Naive thymus-derived CD4-positive, alpha-beta T cell (primary cell): ENCODE measurements at regions of chr10 and their contacts with region 1.

Region 1: GRCh38 chr10:80535671-80536365 is 1.9 kb upstream of the SH2D4B start:
- DNase-seq: peak; percentile 64 to 82 (median 78)
- ATAC-seq: peak; percentile 92
- H3K4me3 ChIP-seq: peak overlapping the region; percentile 59
- H3K4me3 Mint-ChIP-seq: peak overlapping the region; percentile 84 to 99 (median 93)
- H3K27ac ChIP-seq: peak overlapping the region; percentile 82
- H3K27ac Mint-ChIP-seq: peak overlapping the region; percentile 97 to 100 (median 99)
- H3K4me1 ChIP-seq: peaks cover 13 to 28% of the 10 kb centered on the region in 2 donors
- H3K4me1 Mint-ChIP-seq: peaks cover 17 to 42% (median 40%) of the 10 kb centered on the region in 7 donors
- H3K27me3 ChIP-seq: no peaks in the 10 kb centered on the region
- H3K27me3 Mint-ChIP-seq: no peaks in the 10 kb centered on the region

Region 2: DNA sequence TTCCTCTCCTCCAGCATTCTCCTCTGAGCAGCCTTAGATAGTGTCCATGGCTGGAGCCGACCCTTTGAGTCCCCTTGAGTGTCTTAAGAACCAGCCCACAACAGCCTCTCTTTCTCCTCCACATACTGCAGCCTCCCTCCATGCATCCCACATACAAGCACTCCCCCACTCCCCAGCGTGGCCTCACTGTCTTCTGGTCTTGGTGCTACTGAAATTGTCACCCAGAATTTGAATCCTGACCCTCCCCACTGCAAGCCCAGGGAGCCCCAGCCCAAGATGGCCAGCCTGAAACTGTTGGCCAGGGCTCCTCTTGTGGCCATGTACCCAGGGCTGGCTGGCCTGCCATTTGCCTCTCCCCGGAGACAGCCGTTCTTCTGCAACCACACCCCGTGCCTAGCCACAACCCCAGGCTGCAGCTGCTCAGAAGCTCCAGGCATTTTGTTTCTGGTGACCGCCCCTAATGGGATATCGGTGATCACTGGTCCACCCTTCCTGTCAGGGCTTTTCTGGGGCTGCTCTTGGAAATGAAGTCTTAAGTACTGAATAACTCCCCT is 16.9 kb before region 1 on chr10:
- CTCF ChIA-PET with region 1: no interaction called
- POLR2A ChIA-PET with region 1: no interaction called
- intact Hi-C with region 1: no loop called
- DNase-seq: no peak
- ATAC-seq: no peak
- H3K4me3 ChIP-seq: no peak overlapping the region
- H3K4me3 Mint-ChIP-seq: no peak overlapping the region
- H3K27ac ChIP-seq: no peak overlapping the region
- H3K27ac Mint-ChIP-seq: peak overlapping the region; percentile 3 to 79 (median 60)
- H3K4me1 ChIP-seq: no peaks in the 10 kb centered on the region
- H3K4me1 Mint-ChIP-seq: peaks cover 22 to 51% (median 36%) of the 10 kb centered on the region in 7 donors
- H3K27me3 ChIP-seq: no peaks in the 10 kb centered on the region
- H3K27me3 Mint-ChIP-seq: no peaks in the 10 kb centered on the region

Region 3: DNA sequence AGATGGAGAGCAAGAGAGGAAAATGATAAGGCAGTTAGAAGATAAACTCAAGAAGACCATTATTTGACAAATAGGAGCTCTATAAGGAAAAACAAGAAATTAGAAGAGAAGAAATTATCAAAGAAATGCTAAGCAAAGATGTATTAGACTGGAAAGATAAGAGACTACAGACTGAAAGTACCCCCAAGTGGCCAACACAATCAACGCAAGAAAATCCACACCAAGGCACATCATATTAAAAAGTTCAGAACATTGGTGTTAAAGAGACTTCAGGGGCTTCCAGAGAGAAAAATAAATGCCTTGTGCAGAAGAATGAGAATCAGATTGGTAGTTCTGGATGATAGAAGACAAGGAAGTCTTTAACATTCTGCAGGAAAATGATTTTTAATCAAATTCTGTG is 47.9 kb after region 1 on chr10:
- CTCF ChIA-PET with region 1: no interaction called
- POLR2A ChIA-PET with region 1: no interaction called
- intact Hi-C with region 1: loop called in 1 of 2 experiments (anchors 1 kb)
- DNase-seq: peak in 1 of 9 donors; percentile 23
- ATAC-seq: no peak
- H3K4me3 ChIP-seq: no peak overlapping the region
- H3K4me3 Mint-ChIP-seq: no peak overlapping the region
- H3K27ac ChIP-seq: no peak overlapping the region
- H3K27ac Mint-ChIP-seq: no peak overlapping the region
- H3K4me1 ChIP-seq: no peaks in the 10 kb centered on the region
- H3K4me1 Mint-ChIP-seq: peaks cover 0 to 10% (median 3%) of the 10 kb centered on the region in 7 donors
- H3K27me3 ChIP-seq: no peaks in the 10 kb centered on the region
- H3K27me3 Mint-ChIP-seq: peaks cover 0 to 13% (median 0%) of the 10 kb centered on the region in 5 donors

Region 4: DNA sequence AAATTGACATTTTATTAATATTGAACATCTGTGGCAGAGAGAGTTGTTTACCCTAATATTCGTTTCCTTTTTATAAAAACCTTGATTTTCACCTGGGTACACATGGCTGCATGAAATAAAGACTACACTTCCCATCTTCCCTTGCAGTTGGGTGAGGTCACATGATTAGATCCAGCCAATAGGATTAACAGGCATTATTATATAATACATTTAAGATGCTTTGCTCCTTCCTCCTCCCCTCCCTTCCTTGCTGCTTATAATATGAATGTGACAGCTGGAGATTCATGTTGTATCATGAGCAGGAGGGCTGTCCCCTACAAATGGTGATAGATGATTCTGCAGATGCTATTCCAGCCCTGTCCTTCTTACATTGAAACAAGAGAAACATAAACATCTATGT is 148.4 kb after region 1 on chr10:
- CTCF ChIA-PET with region 1: no interaction called
- POLR2A ChIA-PET with region 1: no interaction called
- intact Hi-C with region 1: loop called in 1 of 2 experiments (anchors 5 kb)
- DNase-seq: peak in 7 of 9 donors; percentile 42 to 71 (median 57)
- ATAC-seq: peak; percentile 86
- H3K4me3 ChIP-seq: no peak overlapping the region
- H3K4me3 Mint-ChIP-seq: no peak overlapping the region
- H3K27ac ChIP-seq: no peak overlapping the region
- H3K27ac Mint-ChIP-seq: peak overlapping the region in 2 of 9 donors; percentile 19 to 54
- H3K4me1 ChIP-seq: no peaks in the 10 kb centered on the region
- H3K4me1 Mint-ChIP-seq: peaks cover 0 to 4% (median 0%) of the 10 kb centered on the region in 7 donors
- H3K27me3 ChIP-seq: no peaks in the 10 kb centered on the region
- H3K27me3 Mint-ChIP-seq: peaks cover 0 to 3% (median 0%) of the 10 kb centered on the region in 5 donors

Region 5: GRCh38 chr10:80924063-80924952 is 388.5 kb after region 1 on chr10:
- CTCF ChIA-PET with region 1: no interaction called
- POLR2A ChIA-PET with region 1: no interaction called
- intact Hi-C with region 1: loop called in 1 of 2 experiments (anchors 10 kb)
- DNase-seq: peak in 3 of 9 donors; percentile 1 to 14 (median 10)
- ATAC-seq: no peak
- H3K4me3 ChIP-seq: no peak overlapping the region
- H3K4me3 Mint-ChIP-seq: no peak overlapping the region
- H3K27ac ChIP-seq: no peak overlapping the region
- H3K27ac Mint-ChIP-seq: no peak overlapping the region
- H3K4me1 ChIP-seq: no peaks in the 10 kb centered on the region
- H3K4me1 Mint-ChIP-seq: no peaks in the 10 kb centered on the region
- H3K27me3 ChIP-seq: no peaks in the 10 kb centered on the region
- H3K27me3 Mint-ChIP-seq: peaks cover 17 to 32% (median 24%) of the 10 kb centered on the region in 5 donors